K562 (cell line): ENCODE measurements at regions of chr7 and their contacts with region 1.

Region 1: GRCh38 chr7:25014756-25015155 is 34.8 kb upstream of the OSBPL3 start:
- DNase-seq: no peak
- ATAC-seq: no peak
- H3K4me3 ChIP-seq: no peak overlapping the region
- H3K27ac ChIP-seq: no peak overlapping the region
- H3K4me1 ChIP-seq: no peaks in the 10 kb centered on the region
- H3K27me3 ChIP-seq: no peaks in the 10 kb centered on the region; a peak in 1 of 5 replicates
- CTCF ChIP-seq: no peak
- EP300 ChIP-seq: no peak
- POLR2A ChIP-seq: no peak
- RAD21 ChIP-seq: no peak

Region 2: GRCh38 chr7:24851786-24852185 is 163.0 kb before region 1 on chr7:
- CTCF ChIA-PET with region 1: no interaction called
- POLR2A ChIA-PET with region 1: no interaction called
- in situ Hi-C with region 1: no loop called
- intact Hi-C with region 1: no loop called
- DNase-seq: peak in 2 of 4 experiments; percentile 22 to 26
- ATAC-seq: no peak
- H3K4me3 ChIP-seq: no peak overlapping the region
- H3K27ac ChIP-seq: no peak overlapping the region
- H3K4me1 ChIP-seq: no peaks in the 10 kb centered on the region; a peak in 1 of 5 replicates
- H3K27me3 ChIP-seq: no peaks in the 10 kb centered on the region
- CTCF ChIP-seq: no peak
- EP300 ChIP-seq: no peak
- POLR2A ChIP-seq: no peak
- RAD21 ChIP-seq: no peak

Region 3: GRCh38 chr7:24965831-24966709 is 48.7 kb before region 1 on chr7:
- CTCF ChIA-PET with region 1: no interaction called
- POLR2A ChIA-PET with region 1: no interaction called
- in situ Hi-C with region 1: no loop called
- intact Hi-C with region 1: no loop called
- DNase-seq: peak; percentile 17 to 58 (median 34)
- ATAC-seq: peak; percentile 87
- H3K4me3 ChIP-seq: no peak overlapping the region
- H3K27ac ChIP-seq: no peak overlapping the region
- H3K4me1 ChIP-seq: peaks cover 13 to 44% of the 10 kb centered on the region in 2 experiments
- H3K27me3 ChIP-seq: no peaks in the 10 kb centered on the region
- CTCF ChIP-seq: no peak
- EP300 ChIP-seq: no peak
- POLR2A ChIP-seq: no peak
- RAD21 ChIP-seq: no peak

Region 4: DNA sequence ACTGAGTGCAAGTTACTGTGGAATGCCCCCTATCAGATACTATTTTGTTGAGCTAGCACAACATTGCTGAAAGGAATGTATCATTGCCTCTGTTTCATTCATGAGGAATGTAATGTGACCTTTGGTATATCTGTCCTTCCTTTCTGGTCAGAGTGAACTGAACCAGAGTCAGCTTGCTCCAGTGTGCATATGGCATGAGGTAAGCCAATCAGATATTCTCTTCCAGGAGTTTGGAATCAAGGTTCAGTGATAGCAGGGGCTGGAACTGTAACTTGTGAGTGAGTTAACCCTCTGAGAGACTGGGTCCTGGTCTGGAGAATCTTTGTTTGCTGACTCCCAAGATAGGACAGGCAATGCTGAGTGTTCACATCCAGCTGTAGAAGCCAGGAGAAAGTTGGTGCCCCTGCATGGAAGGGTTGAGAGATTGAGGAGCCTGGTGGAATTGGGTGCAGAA is 10.5 kb after region 1 on chr7:
- CTCF ChIA-PET with region 1: no interaction called
- POLR2A ChIA-PET with region 1: interaction called, 4 read pairs
- in situ Hi-C with region 1: no loop called
- intact Hi-C with region 1: loop called (anchors 1 kb)
- DNase-seq: no peak
- ATAC-seq: no peak
- H3K4me3 ChIP-seq: no peak overlapping the region
- H3K27ac ChIP-seq: no peak overlapping the region
- H3K4me1 ChIP-seq: peaks cover 4 to 16% of the 10 kb centered on the region in 2 experiments; a peak in 3 of 5 replicates
- H3K27me3 ChIP-seq: peaks cover 0 to 13% of the 10 kb centered on the region in 2 experiments; a peak in 3 of 5 replicates
- CTCF ChIP-seq: no peak
- EP300 ChIP-seq: no peak
- POLR2A ChIP-seq: no peak
- RAD21 ChIP-seq: no peak